CD8-positive, alpha-beta T cell (primary cell): ENCODE measurements at regions of chr11 and their contacts with region 1.

Region 1: GRCh38 chr11:34250732-34251639 is 106.8 kb downstream of the ABTB2 start:
- DNase-seq: peak; percentile 33 to 90 (median 79)
- ATAC-seq: peak; percentile 94
- H3K4me3 ChIP-seq: peak overlapping the region; percentile 1 to 47
- H3K4me3 Mint-ChIP-seq: peak overlapping the region; percentile 66
- H3K27ac ChIP-seq: no peak overlapping the region
- H3K27ac Mint-ChIP-seq: peak overlapping the region; percentile 84
- H3K4me1 ChIP-seq: peaks cover 51% of the 10 kb centered on the region
- H3K4me1 Mint-ChIP-seq: peaks cover 54% of the 10 kb centered on the region
- H3K27me3 ChIP-seq: no peaks in the 10 kb centered on the region
- H3K27me3 Mint-ChIP-seq: peaks cover 3% of the 10 kb centered on the region
- CTCF ChIP-seq: no peak

Region 2: GRCh38 chr11:33982661-33983060 is 268.3 kb before region 1 on chr11:
- CTCF ChIA-PET with region 1: no interaction called
- POLR2A ChIA-PET with region 1: no interaction called
- intact Hi-C with region 1: no loop called
- DNase-seq: no peak
- ATAC-seq: no peak
- H3K4me3 ChIP-seq: no peak overlapping the region
- H3K4me3 Mint-ChIP-seq: no peak overlapping the region
- H3K27ac ChIP-seq: no peak overlapping the region
- H3K27ac Mint-ChIP-seq: no peak overlapping the region
- H3K4me1 ChIP-seq: no peaks in the 10 kb centered on the region
- H3K4me1 Mint-ChIP-seq: no peaks in the 10 kb centered on the region
- H3K27me3 ChIP-seq: peaks cover 0 to 2% of the 10 kb centered on the region in 2 experiments
- H3K27me3 Mint-ChIP-seq: peaks cover 6% of the 10 kb centered on the region
- CTCF ChIP-seq: no peak

Region 3: GRCh38 chr11:34134765-34135164 is 116.2 kb before region 1 on chr11:
- CTCF ChIA-PET with region 1: no interaction called
- POLR2A ChIA-PET with region 1: no interaction called
- intact Hi-C with region 1: no loop called
- DNase-seq: no peak
- ATAC-seq: no peak
- H3K4me3 ChIP-seq: no peak overlapping the region
- H3K4me3 Mint-ChIP-seq: no peak overlapping the region
- H3K27ac ChIP-seq: no peak overlapping the region
- H3K27ac Mint-ChIP-seq: no peak overlapping the region
- H3K4me1 ChIP-seq: no peaks in the 10 kb centered on the region
- H3K4me1 Mint-ChIP-seq: no peaks in the 10 kb centered on the region
- H3K27me3 ChIP-seq: no peaks in the 10 kb centered on the region
- H3K27me3 Mint-ChIP-seq: no peaks in the 10 kb centered on the region
- CTCF ChIP-seq: no peak

Region 4: DNA sequence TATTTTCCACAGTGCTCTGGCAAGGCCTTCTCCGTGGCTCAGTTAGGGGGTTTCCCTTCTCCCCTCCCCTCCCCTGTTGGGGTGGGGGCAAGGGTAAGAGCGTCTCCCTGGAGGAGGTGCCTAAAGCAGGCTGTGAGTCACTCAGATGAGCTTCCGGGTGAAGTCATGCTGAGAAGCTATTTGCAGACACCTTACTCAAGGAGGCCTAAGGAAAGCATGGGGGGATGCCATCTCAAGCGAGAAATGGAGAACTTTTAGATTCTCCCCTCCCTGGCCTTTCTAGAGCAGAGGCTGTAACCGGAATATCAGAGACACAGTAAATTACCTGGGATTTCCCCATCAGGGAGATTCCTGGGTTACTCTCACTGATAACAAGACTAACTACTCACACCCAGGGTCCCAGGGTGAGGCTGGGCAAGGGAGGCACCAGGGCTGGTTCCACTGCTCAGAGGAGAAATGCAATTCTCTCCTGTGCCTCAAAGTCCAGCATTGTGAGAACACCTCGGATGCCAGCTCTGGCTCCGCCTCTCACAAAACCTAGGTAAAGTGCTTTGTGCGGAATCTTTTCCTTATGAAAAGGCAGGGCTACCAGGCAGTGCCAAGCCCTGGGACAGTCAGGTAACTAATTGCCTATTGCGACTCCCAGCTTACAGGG is 16.8 kb before region 1 on chr11:
- CTCF ChIA-PET with region 1: interaction called, 4 read pairs
- POLR2A ChIA-PET with region 1: interaction called, 13 read pairs
- intact Hi-C with region 1: loop called (anchors 1 to 2 kb)
- DNase-seq: peak; percentile 30 to 91 (median 74)
- ATAC-seq: peak; percentile 99
- H3K4me3 ChIP-seq: no peak overlapping the region
- H3K4me3 Mint-ChIP-seq: no peak overlapping the region
- H3K27ac ChIP-seq: no peak overlapping the region
- H3K27ac Mint-ChIP-seq: peak overlapping the region; percentile 60
- H3K4me1 ChIP-seq: peaks cover 9% of the 10 kb centered on the region
- H3K4me1 Mint-ChIP-seq: peaks cover 16% of the 10 kb centered on the region
- H3K27me3 ChIP-seq: no peaks in the 10 kb centered on the region
- H3K27me3 Mint-ChIP-seq: no peaks in the 10 kb centered on the region
- CTCF ChIP-seq: no peak

Region 5: GRCh38 chr11:34653826-34654490 is 403.0 kb after region 1 on chr11:
- CTCF ChIA-PET with region 1: no interaction called
- POLR2A ChIA-PET with region 1: no interaction called
- intact Hi-C with region 1: loop called in 1 of 2 experiments (anchors 10 kb)
- DNase-seq: peak in 1 of 9 experiments; percentile 19
- ATAC-seq: no peak
- H3K4me3 ChIP-seq: no peak overlapping the region
- H3K4me3 Mint-ChIP-seq: no peak overlapping the region
- H3K27ac ChIP-seq: no peak overlapping the region
- H3K27ac Mint-ChIP-seq: no peak overlapping the region
- H3K4me1 ChIP-seq: peaks cover 43% of the 10 kb centered on the region
- H3K4me1 Mint-ChIP-seq: peaks cover 38% of the 10 kb centered on the region
- H3K27me3 ChIP-seq: peaks cover 0 to 3% of the 10 kb centered on the region in 2 experiments
- H3K27me3 Mint-ChIP-seq: peaks cover 32% of the 10 kb centered on the region
- CTCF ChIP-seq: no peak